ENCODE measurements at regions of chr9 and their contacts with region 1.

Region 1: DNA sequence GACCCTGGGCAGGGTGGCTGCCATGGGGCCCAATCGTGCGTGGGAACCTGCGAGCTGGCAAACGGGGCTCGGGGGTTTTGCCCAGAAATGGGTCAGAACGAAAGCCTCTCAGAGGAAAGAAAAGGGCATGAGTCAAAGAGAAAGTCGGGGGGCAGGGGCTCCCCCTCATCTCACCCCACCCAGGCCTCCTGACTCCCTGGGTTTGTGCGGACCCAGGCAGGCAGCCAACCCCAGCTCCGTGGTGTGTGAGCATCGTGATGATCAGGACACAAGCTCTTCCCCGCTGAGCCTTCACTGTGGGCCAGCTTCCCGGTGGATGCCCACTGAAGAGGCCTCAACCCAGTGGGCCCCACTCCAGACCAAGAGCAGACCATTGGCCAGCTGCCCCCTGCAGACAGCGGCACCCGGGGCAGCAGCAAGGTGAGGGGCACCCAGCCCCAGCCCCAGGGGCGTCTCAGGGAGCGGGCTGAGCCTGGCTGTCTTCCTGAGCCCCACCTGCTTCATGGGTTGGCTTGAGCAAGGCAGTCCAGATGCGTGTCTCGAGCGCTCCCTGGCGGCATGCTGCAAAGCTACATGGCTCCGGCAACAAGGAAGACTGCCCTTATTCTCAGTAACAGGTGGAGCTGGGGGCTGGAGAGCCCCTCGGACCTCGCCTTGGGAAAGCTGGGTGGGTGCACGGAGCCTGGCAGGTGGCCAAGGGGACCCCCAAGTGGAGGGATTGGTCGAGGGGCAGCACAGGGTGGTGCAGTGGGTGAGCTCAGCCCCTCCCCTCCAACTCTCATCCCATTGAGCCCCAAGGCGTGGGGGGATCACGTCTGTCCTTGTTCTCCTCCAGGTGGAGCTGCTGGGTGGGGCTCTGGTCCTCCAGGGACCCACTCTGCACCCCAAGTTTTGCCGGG is 3.2 kb upstream of the FUT7 start:
- DNase-seq: peak; percentile 90 to 92
- ATAC-seq: peak; percentile 76 to 94
- H3K4me3 ChIP-seq: no peak overlapping the region
- H3K27ac ChIP-seq: peak overlapping the region; percentile 34 to 67; a peak in 4 of 6 replicates
- H3K4me1 ChIP-seq: peaks cover 18% of the 10 kb centered on the region
- CTCF ChIP-seq: peak; percentile 86
- EP300 ChIP-seq: no peak
- POLR2A ChIP-seq: no peak
- RAD21 ChIP-seq: peak; percentile 82 to 92

Region 2: GRCh38 chr9:136703276-136703860 is 331.7 kb before region 1 on chr9:
- CTCF ChIA-PET with region 1: no interaction called
- POLR2A ChIA-PET with region 1: no interaction called
- DNase-seq: no peak
- ATAC-seq: no peak
- H3K4me3 ChIP-seq: no peak overlapping the region
- H3K27ac ChIP-seq: no peak overlapping the region
- H3K4me1 ChIP-seq: peaks cover 4% of the 10 kb centered on the region
- CTCF ChIP-seq: no peak
- EP300 ChIP-seq: no peak
- POLR2A ChIP-seq: no peak
- RAD21 ChIP-seq: no peak

Region 3: GRCh38 chr9:136790927-136791641 is 244.0 kb before region 1 on chr9 and contains the start of gene TMEM141:
- CTCF ChIA-PET with region 1: interaction called, 33 read pairs
- POLR2A ChIA-PET with region 1: no interaction called
- DNase-seq: peak; percentile 90 to 100
- ATAC-seq: peak; percentile 85 to 90
- H3K4me3 ChIP-seq: peak within 1 kb of the TSS; percentile 88
- H3K27ac ChIP-seq: peak within 1 kb of the TSS; percentile 91 to 94
- H3K4me1 ChIP-seq: peaks cover 45% of the 10 kb centered on the region
- CTCF ChIP-seq: no peak
- EP300 ChIP-seq: no peak
- POLR2A ChIP-seq: peak; percentile 75
- RAD21 ChIP-seq: no peak
- polyA plus RNA-seq, gene TMEM141: 64.5 and 78.0 TPM in 2 replicates

Region 4: GRCh38 chr9:136961279-136962065 is 73.6 kb before region 1 on chr9:
- CTCF ChIA-PET with region 1: interaction called, 10 read pairs
- POLR2A ChIA-PET with region 1: no interaction called
- DNase-seq: no peak
- ATAC-seq: no peak
- H3K4me3 ChIP-seq: no peak overlapping the region
- H3K27ac ChIP-seq: no peak overlapping the region
- H3K4me1 ChIP-seq: peaks cover 12% of the 10 kb centered on the region; the same call in 2 of the 3 replicates
- CTCF ChIP-seq: no peak
- EP300 ChIP-seq: no peak
- POLR2A ChIP-seq: no peak
- RAD21 ChIP-seq: no peak

Region 5: GRCh38 chr9:136991993-136992818 is 42.9 kb before region 1 on chr9 and contains the start of gene PAXX:
- CTCF ChIA-PET with region 1: interaction called, 34 read pairs
- POLR2A ChIA-PET with region 1: interaction called, 3 read pairs
- DNase-seq: peak; percentile 88 to 94
- ATAC-seq: peak; percentile 74 to 82
- H3K4me3 ChIP-seq: peak within 1 kb of the TSS; percentile 89
- H3K27ac ChIP-seq: peak within 1 kb of the TSS; percentile 91 to 97
- H3K4me1 ChIP-seq: peaks cover 45% of the 10 kb centered on the region
- CTCF ChIP-seq: no peak
- EP300 ChIP-seq: no peak
- POLR2A ChIP-seq: peak; percentile 65
- RAD21 ChIP-seq: no peak
- polyA plus RNA-seq, gene PAXX: 12.6 and 15.6 TPM in 2 replicates

Region 6: GRCh38 chr9:137012694-137013584 is 22.2 kb before region 1 on chr9:
- CTCF ChIA-PET with region 1: interaction called, 169 read pairs
- POLR2A ChIA-PET with region 1: no interaction called
- DNase-seq: no peak
- ATAC-seq: 0 out of 6 replicates have a peak, but pooled peaks of 1 of the 2 experiments have one; percentile 9
- H3K4me3 ChIP-seq: no peak overlapping the region
- H3K27ac ChIP-seq: no peak overlapping the region
- H3K4me1 ChIP-seq: no peaks in the 10 kb centered on the region
- CTCF ChIP-seq: no peak
- EP300 ChIP-seq: no peak
- POLR2A ChIP-seq: no peak
- RAD21 ChIP-seq: no peak

Region 7: GRCh38 chr9:137070201-137070905 is 35.2 kb after region 1 on chr9 and contains the start of gene SAPCD2:
- CTCF ChIA-PET with region 1: interaction called, 207 read pairs
- POLR2A ChIA-PET with region 1: no interaction called
- DNase-seq: peak; percentile 86 to 88
- ATAC-seq: peak; percentile 73 to 89
- H3K4me3 ChIP-seq: peak within 1 kb of the TSS; percentile 52
- H3K27ac ChIP-seq: peak within 1 kb of the TSS; percentile 68 to 88
- H3K4me1 ChIP-seq: peaks cover 27% of the 10 kb centered on the region
- CTCF ChIP-seq: no peak; the same call in 2 of the 3 replicates
- EP300 ChIP-seq: no peak
- POLR2A ChIP-seq: peak; percentile 29; the same call in 1 of the 2 replicates
- RAD21 ChIP-seq: no peak
- polyA plus RNA-seq, gene SAPCD2: 6.5 and 6.9 TPM in 2 replicates

Region 8: DNA sequence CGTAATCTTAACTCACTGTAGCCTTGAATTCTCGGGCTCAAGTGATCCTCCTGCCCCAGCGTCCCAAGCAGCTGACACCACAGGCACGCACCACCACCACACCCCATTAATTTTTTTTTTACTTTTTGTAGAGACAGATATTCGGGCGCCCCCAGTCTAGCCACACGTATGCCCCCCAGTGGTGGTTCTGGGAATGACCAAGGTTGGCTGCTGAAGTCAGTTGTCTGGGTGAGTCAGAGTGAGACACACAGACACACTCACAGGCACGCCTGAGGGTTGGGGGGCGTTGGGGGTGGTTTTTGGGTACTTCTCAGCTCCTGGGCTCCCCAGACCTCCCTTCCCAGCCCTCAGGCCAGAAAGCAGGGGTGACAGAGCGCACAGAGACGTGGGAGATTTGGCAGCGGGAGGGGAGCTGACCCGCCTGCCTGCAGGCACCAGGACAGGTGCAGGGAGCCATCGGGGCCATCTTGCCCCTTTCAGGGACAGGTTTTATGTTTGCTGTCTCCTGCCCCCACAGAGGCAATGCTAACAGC is 410.2 kb after region 1 on chr9:
- CTCF ChIA-PET with region 1: no interaction called
- POLR2A ChIA-PET with region 1: no interaction called
- DNase-seq: peak; percentile 75 to 77
- ATAC-seq: peak; percentile 63 to 73
- H3K4me3 ChIP-seq: no peak overlapping the region
- H3K27ac ChIP-seq: peak overlapping the region in 1 of 2 experiments; percentile 48; a peak in 1 of 6 replicates
- H3K4me1 ChIP-seq: peaks cover 10% of the 10 kb centered on the region
- CTCF ChIP-seq: peak; percentile 79
- EP300 ChIP-seq: no peak
- POLR2A ChIP-seq: no peak
- RAD21 ChIP-seq: peak; percentile 62 to 66

Measured in A549 (cell line).